GM12878 (cell line): ENCODE measurements at regions of chr3 and their contacts with region 1.

Region 1: DNA sequence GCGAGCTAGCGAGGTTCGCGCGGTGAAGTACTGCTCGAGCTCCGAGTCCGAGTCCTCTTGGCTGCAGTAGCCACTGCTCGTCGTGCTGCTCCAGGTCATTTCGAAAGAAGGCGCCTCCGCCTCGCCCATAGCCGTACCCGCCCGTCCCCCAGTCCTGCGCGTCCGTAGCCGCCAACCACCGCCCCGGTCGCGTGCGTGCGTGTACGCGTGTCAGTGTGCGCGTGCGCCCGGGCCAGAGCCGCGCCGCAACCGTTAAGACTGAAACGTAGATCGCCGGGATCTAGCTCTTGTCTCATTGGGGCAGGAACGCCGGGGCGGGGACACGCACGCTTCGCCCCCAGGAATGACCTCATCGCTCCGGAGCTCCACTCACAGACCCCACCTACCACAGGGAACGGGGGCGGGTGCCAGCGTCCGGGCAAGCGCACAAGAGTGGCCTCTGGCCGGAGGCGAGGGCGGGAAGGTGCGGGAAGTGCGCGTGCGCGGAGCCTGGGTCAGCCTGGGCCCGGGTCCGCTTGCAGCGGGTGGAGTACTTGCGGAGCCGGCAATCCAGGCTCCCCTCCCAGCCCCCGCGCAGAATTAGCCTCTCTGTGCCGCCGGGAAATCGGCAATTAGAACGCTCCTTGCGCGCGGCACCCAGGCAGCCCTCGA is 3.3 kb downstream of the RASSF1 start:
- DNase-seq: peak; percentile 96
- ATAC-seq: peak; percentile 83
- H3K4me3 ChIP-seq: peak overlapping the region; percentile 96
- H3K27ac ChIP-seq: peak overlapping the region; percentile 92
- H3K4me1 ChIP-seq: peaks cover 10% of the 10 kb centered on the region; the same call in 1 of the 2 replicates
- H3K27me3 ChIP-seq: no peaks in the 10 kb centered on the region
- CTCF ChIP-seq: no peak
- EP300 ChIP-seq: 0 out of 4 replicates have a peak, but pooled peaks of 1 of the 2 experiments have one; percentile 33
- POLR2A ChIP-seq: peak; percentile 92
- RAD21 ChIP-seq: no peak

Region 2: DNA sequence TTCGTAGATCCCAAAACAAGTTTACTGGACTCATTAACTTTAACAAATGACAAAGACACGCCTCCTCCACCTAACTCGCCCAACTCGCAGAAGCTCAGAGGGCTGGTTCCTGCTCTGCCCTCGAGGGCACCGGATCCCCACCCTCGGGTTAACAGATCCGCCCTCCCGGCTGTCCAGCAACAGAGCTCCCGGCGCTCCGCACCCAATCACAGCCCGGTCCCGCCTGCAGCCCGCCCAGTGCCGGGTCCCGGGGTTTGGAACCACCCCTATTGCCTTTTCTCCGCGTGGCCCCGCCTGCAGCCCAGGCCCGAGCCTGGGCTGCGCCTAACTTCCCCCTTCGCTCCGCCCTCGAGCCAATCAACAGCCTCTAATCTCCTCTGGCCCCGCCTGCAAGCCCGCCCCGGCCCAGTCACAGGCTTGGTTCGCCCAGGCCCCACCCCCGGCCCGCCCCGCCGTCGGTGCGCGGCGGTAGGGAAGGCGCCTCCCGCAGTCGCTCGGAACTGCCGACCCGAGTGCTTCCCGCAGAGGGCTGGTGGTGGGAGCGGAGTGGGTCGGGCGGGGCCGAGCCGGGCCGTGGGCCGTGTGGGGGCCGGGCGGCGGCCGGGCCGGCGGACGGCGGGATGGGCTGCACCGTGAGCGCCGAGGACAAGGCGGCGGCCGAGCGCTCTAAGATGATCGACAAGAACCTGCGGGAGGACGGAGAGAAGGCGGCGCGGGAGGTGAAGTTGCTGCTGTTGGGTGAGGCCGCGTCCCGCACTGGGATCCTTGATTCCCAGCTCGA is 101.4 kb before region 1 on chr3 and contains the start of gene GNAI2:
- CTCF ChIA-PET with region 1: no interaction called
- POLR2A ChIA-PET with region 1: interaction called, 27 read pairs
- RAD21 ChIA-PET with region 1: interaction called, 5 read pairs
- SMC1A ChIA-PET with region 1: interaction called, 4 read pairs
- in situ Hi-C with region 1: no loop called
- intact Hi-C with region 1: loop called (anchors 5 kb)
- DNase-seq: peak; percentile 91
- ATAC-seq: peak; percentile 93
- H3K4me3 ChIP-seq: peak within 1 kb of the TSS; percentile 100
- H3K27ac ChIP-seq: peak within 1 kb of the TSS; percentile 91
- H3K4me1 ChIP-seq: peaks cover 14% of the 10 kb centered on the region
- H3K27me3 ChIP-seq: no peaks in the 10 kb centered on the region
- CTCF ChIP-seq: no peak
- EP300 ChIP-seq: no peak
- POLR2A ChIP-seq: peak; percentile 94
- RAD21 ChIP-seq: no peak
- polyA plus RNA-seq, gene GNAI2: 5.0 to 15.3 TPM

Region 3: GRCh38 chr3:50292159-50293078 is 44.9 kb before region 1 on chr3 and contains the start of gene IFRD2:
- CTCF ChIA-PET with region 1: no interaction called
- POLR2A ChIA-PET with region 1: interaction called, 11 read pairs
- RAD21 ChIA-PET with region 1: interaction called, 3 read pairs
- SMC1A ChIA-PET with region 1: no interaction called
- in situ Hi-C with region 1: no loop called
- intact Hi-C with region 1: loop called (anchors 5 kb)
- DNase-seq: peak; percentile 92
- ATAC-seq: peak; percentile 99
- H3K4me3 ChIP-seq: peak within 1 kb of the TSS; percentile 97
- H3K27ac ChIP-seq: peak within 1 kb of the TSS; percentile 66
- H3K4me1 ChIP-seq: peaks cover 3% of the 10 kb centered on the region; the same call in 1 of the 2 replicates
- H3K27me3 ChIP-seq: no peaks in the 10 kb centered on the region
- CTCF ChIP-seq: no peak
- EP300 ChIP-seq: no peak
- POLR2A ChIP-seq: peak; percentile 89
- RAD21 ChIP-seq: no peak
- polyA plus RNA-seq, gene IFRD2: 33.7 to 82.8 TPM

Region 4: DNA sequence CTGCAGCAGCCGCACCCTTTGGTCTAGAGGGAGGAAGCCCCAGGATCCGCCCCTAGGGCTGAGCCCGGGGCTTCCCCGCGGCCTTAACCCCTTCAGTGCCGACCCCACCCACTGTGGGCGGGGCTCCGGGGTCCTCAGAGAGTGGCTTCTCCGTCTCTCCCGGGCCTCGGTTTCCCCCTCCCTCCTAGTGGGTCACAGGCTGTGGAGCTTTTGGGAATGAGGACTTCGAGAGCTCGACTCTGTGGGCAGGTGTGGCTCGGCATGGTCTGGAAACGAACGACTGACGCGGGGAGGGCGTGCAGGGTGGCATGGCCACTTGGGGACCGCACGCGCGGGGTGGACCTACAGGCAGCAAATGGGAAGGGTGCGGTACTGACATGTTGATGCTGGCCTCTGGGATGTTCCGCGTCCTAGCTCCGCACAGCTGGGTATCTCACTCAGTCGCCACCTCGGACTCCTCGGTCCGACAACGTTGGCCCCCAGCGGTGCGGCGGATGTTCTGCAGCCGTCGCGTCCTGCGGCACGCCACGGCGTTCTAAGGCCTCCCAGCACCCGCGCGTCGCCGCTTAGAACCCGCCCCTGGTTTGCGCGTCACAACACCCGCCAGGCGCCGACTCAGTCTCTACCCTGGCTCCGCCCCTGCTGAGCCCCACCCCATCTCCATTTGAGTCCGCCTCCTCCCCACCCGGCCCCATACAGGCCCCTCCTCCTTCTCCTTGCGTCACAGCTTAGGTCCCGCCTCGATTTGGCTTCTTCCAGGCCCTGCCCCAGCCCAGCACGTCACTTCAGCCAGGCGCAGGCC is 38.3 kb before region 1 on chr3 and contains the starts of genes HYAL3 and NAA80:
- CTCF ChIA-PET with region 1: interaction called, 5 read pairs
- POLR2A ChIA-PET with region 1: interaction called, 30 read pairs
- RAD21 ChIA-PET with region 1: interaction called, 15 read pairs
- SMC1A ChIA-PET with region 1: interaction called, 9 read pairs
- in situ Hi-C with region 1: no loop called
- intact Hi-C with region 1: loop called (anchors 5 kb)
- DNase-seq: peak; percentile 98
- ATAC-seq: peak; percentile 90
- H3K4me3 ChIP-seq: peak within 1 kb of the TSS; percentile 82
- H3K27ac ChIP-seq: peak within 1 kb of the TSS; percentile 83
- H3K4me1 ChIP-seq: peaks cover 4% of the 10 kb centered on the region
- H3K27me3 ChIP-seq: no peaks in the 10 kb centered on the region
- CTCF ChIP-seq: peak; percentile 24 to 56 (median 50); a peak in 4 of 6 replicates
- EP300 ChIP-seq: no peak
- POLR2A ChIP-seq: peak; percentile 99
- RAD21 ChIP-seq: no peak
- polyA plus RNA-seq, gene HYAL3: 0.37 TPM
- polyA plus RNA-seq, gene NAA80: 0.48 to 0.62 TPM

Region 5: GRCh38 chr3:50321336-50322114 is 15.8 kb before region 1 on chr3:
- CTCF ChIA-PET with region 1: interaction called, 72 read pairs
- POLR2A ChIA-PET with region 1: interaction called, 58 read pairs
- RAD21 ChIA-PET with region 1: interaction called, 21 read pairs
- SMC1A ChIA-PET with region 1: interaction called, 4 read pairs
- in situ Hi-C with region 1: no loop called
- intact Hi-C with region 1: no loop called
- DNase-seq: peak; percentile 42
- ATAC-seq: peak; percentile 91
- H3K4me3 ChIP-seq: peak overlapping the region; percentile 70
- H3K27ac ChIP-seq: peak overlapping the region; percentile 88
- H3K4me1 ChIP-seq: peaks cover 22% of the 10 kb centered on the region
- H3K27me3 ChIP-seq: no peaks in the 10 kb centered on the region
- CTCF ChIP-seq: peak; percentile 32 to 68 (median 35); a peak in 5 of 6 replicates
- EP300 ChIP-seq: no peak
- POLR2A ChIP-seq: peak; percentile 56; the same call in 1 of the 2 replicates
- RAD21 ChIP-seq: no peak

Region 6: GRCh38 chr3:50350527-50351322 is 13.4 kb after region 1 on chr3 and contains the starts of genes CYB561D2 and NPRL2:
- CTCF ChIA-PET with region 1: interaction called, 59 read pairs
- POLR2A ChIA-PET with region 1: interaction called, 84 read pairs
- RAD21 ChIA-PET with region 1: interaction called, 16 read pairs
- SMC1A ChIA-PET with region 1: interaction called, 12 read pairs
- in situ Hi-C with region 1: no loop called
- intact Hi-C with region 1: no loop called
- DNase-seq: peak; percentile 89
- ATAC-seq: peak; percentile 95
- H3K4me3 ChIP-seq: peak within 1 kb of the TSS; percentile 83
- H3K27ac ChIP-seq: peak within 1 kb of the TSS; percentile 86
- H3K4me1 ChIP-seq: peaks cover 22% of the 10 kb centered on the region
- H3K27me3 ChIP-seq: no peaks in the 10 kb centered on the region
- CTCF ChIP-seq: no peak
- EP300 ChIP-seq: 0 out of 4 replicates have a peak, but pooled peaks of 1 of the 2 experiments have one; percentile 9
- POLR2A ChIP-seq: peak; percentile 96
- RAD21 ChIP-seq: no peak
- polyA plus RNA-seq, gene CYB561D2: 7.6 to 11.9 TPM
- polyA plus RNA-seq, gene NPRL2: 33.6 to 36.2 TPM

Region 7: DNA sequence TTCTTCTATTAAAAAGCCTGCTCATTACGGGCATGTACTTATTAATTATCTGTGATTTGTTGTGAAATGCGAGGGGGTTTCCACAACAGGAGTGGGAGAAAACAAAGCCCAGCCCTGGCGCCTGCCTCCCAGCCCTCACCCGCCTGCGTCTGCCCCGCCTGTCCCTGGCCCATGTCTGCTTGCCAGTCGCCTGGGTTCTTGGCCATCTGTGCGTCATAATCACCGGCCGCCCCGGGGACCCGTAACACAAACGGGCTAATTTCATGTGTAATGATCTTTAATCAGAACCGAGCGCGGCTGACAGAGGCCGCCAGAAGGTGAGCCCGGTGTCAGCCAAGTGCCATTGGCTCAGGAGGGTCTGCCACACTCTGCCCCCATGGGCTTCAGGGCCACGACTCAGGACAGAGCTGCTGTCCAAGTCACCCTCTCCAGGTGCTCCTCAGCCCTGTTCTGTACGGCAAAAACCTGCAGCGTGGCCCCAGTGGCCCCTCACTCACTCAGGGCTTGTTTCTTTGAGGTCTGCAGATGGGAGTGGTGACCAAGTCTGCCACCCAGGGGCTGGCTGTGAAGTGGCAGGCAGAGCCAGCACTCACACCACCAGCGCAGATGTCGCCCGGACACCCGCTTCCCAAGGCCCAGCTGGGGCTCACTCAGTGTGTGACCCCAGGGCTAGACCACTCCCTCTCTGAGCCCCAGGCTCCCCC is 50.9 kb after region 1 on chr3:
- CTCF ChIA-PET with region 1: no interaction called
- POLR2A ChIA-PET with region 1: no interaction called
- RAD21 ChIA-PET with region 1: no interaction called
- SMC1A ChIA-PET with region 1: no interaction called
- in situ Hi-C with region 1: no loop called
- intact Hi-C with region 1: no loop called
- DNase-seq: no peak
- ATAC-seq: peak; percentile 74
- H3K4me3 ChIP-seq: no peak overlapping the region
- H3K27ac ChIP-seq: no peak overlapping the region
- H3K4me1 ChIP-seq: no peaks in the 10 kb centered on the region
- H3K27me3 ChIP-seq: peaks cover 0 to 3% of the 10 kb centered on the region in 2 experiments; a peak in 3 of 4 replicates
- CTCF ChIP-seq: peak; percentile 18 to 30 (median 29); a peak in 4 of 6 replicates
- EP300 ChIP-seq: no peak
- POLR2A ChIP-seq: no peak
- RAD21 ChIP-seq: no peak

Region 8: DNA sequence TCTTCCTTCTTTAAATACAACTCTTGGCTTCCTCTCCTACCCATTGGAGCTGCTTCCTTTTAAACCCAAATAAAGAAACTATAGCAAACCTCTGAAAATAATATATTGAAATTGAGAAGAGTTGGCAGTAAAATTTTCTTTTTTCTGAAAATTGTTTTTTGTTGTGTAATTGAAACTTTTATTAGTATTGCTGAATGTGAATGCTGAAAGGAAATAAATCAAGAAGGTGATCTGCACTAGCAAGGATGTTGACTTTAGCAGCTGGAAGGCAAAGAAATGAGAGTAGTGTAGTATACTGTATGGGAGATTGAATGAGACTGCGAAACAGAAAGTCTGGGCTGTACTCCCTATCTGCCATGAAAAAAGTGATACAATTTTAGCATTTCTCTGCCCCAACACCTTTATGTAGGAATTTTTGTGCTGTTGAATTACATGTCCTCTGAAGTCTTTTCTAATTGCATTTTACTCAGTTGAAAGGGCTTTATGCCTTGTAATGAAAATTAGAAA is 503.7 kb after region 1 on chr3:
- CTCF ChIA-PET with region 1: no interaction called
- POLR2A ChIA-PET with region 1: no interaction called
- RAD21 ChIA-PET with region 1: no interaction called
- SMC1A ChIA-PET with region 1: no interaction called
- in situ Hi-C with region 1: no loop called
- intact Hi-C with region 1: no loop called
- DNase-seq: no peak
- ATAC-seq: no peak
- H3K4me3 ChIP-seq: no peak overlapping the region
- H3K27ac ChIP-seq: no peak overlapping the region
- H3K4me1 ChIP-seq: no peaks in the 10 kb centered on the region
- H3K27me3 ChIP-seq: no peaks in the 10 kb centered on the region
- CTCF ChIP-seq: no peak
- EP300 ChIP-seq: no peak
- POLR2A ChIP-seq: no peak
- RAD21 ChIP-seq: no peak

Region 9: DNA sequence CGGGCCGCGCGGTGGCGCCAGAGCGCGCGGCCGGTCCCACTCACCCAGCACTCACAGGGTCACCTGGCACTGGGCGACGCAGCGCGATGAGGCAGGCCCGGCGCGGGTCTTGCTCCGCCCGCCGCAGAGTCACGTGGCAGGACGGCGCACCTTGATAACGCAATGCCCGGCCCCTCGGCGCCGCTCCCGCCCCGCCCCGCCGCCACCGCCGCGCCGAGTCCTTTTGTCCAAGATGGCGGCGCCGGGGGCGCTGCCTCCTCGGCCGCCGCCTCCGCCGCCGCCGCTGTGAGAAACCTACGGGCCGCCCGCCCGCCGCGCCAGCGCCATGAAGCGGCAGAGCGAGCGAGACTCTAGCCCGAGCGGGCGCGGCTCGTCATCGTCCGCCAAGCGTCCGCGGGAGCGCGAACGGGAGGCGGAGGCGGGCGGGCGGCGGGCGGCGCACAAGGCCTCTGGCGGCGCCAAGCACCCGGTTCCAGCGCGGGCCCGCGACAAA is 1053.8 kb after region 1 on chr3 and contains the start of gene RBM15B:
- CTCF ChIA-PET with region 1: no interaction called
- POLR2A ChIA-PET with region 1: no interaction called
- RAD21 ChIA-PET with region 1: no interaction called
- SMC1A ChIA-PET with region 1: no interaction called
- in situ Hi-C with region 1: loop called (anchors 10 kb)
- intact Hi-C with region 1: no loop called
- DNase-seq: peak; percentile 80
- ATAC-seq: peak; percentile 96
- H3K4me3 ChIP-seq: peak within 1 kb of the TSS; percentile 83
- H3K27ac ChIP-seq: peak within 1 kb of the TSS; percentile 73
- H3K4me1 ChIP-seq: peaks cover 25% of the 10 kb centered on the region
- H3K27me3 ChIP-seq: no peaks in the 10 kb centered on the region
- CTCF ChIP-seq: peak; percentile 84 to 93 (median 93); a peak in 4 of 6 replicates
- EP300 ChIP-seq: 0 out of 4 replicates have a peak, but pooled peaks of 1 of the 2 experiments have one; percentile 12
- POLR2A ChIP-seq: peak; percentile 81
- RAD21 ChIP-seq: peak; percentile 44; the same call in 1 of the 2 replicates
- polyA plus RNA-seq, gene RBM15B: 2.4 to 3.0 TPM